Heart right ventricle (tissue), 16 donors: ENCODE measurements at regions of chr9 and their contacts with region 1.

Region 1: GRCh38 chr9:121992571-121993212 is 100.4 kb downstream of the TTLL11 start:
- DNase-seq: peak; percentile 34 to 67
- ATAC-seq: peak; percentile 46 to 82 (median 78)
- H3K4me3 ChIP-seq: no peak overlapping the region
- H3K27ac ChIP-seq: no peak overlapping the region
- H3K4me1 ChIP-seq: peaks cover 0 to 28% (median 6%) of the 10 kb centered on the region in 9 donors
- H3K27me3 ChIP-seq: no peaks in the 10 kb centered on the region
- CTCF ChIP-seq: peak; percentile 80 to 91 (median 85)

Region 2: DNA sequence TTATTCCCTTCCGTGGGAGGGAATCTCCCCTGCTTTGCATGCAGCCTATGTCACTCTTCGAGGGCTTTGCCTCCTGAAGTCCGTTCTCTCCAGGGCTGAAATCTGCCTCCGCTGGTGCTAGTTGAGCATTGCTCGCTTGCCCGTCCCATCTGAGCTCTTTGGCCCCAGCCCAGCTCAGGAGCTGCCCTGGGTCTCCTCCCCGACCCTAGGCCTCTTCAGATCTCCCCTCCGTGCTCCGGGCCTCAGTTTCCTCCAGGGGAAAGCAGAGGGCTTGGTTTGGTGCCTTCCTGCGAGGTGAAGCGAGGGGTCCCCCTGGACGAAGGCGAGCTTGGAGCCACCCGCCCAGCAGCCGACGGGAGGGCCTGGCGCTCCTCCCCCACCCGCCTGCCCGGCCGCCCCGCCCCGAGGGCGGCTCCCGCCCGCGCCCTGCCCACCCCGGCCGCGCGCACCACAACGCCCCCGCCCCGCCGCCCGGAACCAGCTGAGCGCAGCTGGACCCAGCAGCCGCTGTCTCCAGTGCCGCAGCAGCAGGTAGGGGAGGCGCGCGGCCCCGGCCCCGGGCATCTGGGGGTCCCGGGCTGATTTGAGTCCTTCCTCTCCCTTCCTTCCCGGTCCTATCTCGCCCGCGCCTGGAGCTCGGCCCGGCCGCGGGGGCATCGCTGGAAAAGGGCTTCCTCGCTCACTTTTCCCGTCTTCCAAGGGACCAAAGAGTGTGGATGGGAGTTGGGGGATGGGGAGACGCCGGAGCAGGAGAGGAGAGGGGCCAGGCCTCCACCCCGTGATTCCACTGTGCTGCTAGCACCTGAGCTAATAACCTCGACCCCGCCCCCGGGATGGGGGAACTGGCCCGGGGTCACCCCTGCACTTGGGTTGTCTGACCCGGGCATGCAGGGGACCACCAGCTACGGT is 724.7 kb before region 1 on chr9 and contains the start of gene GSN:
- intact Hi-C with region 1: no loop called
- DNase-seq: peak; percentile 86 to 89
- ATAC-seq: peak; percentile 83 to 94 (median 90)
- H3K4me3 ChIP-seq: peak within 1 kb of the TSS; percentile 79 to 95 (median 90)
- H3K27ac ChIP-seq: peak within 1 kb of the TSS; percentile 70 to 92 (median 88)
- H3K4me1 ChIP-seq: peaks cover 8 to 66% (median 57%) of the 10 kb centered on the region in 9 donors
- H3K27me3 ChIP-seq: no peaks in the 10 kb centered on the region
- CTCF ChIP-seq: peak in 3 of 9 donors; percentile 13 to 17 (median 16)
- total RNA-seq, gene GSN: 532 to 861 (median 668) TPM

Region 3: DNA sequence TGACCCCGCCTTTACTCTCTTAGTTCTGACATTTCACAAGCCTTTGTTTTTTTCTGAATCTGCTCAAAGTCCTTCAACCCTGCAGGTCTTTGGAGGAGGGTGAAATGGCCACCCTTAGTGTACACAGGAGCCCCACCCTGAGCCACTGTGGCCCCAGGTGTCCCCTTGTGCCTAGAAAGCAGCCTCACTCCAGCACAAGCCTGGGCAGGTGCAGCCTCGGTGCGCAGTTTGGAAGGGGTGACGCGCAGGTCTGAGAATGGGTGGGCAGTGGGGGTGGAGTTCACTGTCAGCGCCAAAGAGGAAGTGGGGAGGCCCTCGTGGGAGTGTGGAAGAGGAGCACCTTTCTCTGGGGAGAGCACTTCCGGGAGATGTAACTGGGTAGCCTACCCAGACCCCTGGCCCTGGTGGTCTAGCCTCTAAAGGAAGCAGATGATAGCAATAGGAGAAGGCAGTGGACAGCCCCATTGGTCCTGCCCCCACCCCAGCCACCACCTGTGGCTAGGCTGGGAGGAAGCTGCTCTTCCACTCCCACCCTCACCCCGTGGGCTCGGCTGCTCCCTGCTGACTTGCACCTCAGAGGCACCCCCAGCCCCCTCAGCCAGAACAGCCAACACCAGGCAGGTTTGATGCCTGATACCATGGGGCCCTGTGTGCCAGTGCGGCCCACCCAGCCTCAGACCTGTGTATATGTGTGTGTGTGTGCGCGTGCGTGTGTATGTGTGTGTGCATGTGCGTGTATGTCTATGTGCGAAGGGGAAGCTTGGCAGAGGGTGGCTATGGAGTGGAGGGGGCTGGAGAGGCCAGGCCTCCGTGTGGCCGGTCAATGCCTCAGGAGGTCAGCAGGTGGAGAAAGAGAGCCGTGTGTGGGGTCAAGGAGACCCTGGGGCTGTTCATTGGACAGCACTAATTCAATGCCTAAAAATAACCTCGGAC is 358.1 kb before region 1 on chr9:
- intact Hi-C with region 1: loop called in 4 of 10 experiments (anchors 5 kb)
- DNase-seq: no peak
- ATAC-seq: peak; percentile 61 to 80 (median 74)
- H3K4me3 ChIP-seq: no peak overlapping the region
- H3K27ac ChIP-seq: peak overlapping the region in 5 of 10 donors; percentile 15 to 70 (median 51)
- H3K4me1 ChIP-seq: peaks cover 17 to 69% (median 47%) of the 10 kb centered on the region in 9 donors
- H3K27me3 ChIP-seq: no peaks in the 10 kb centered on the region
- CTCF ChIP-seq: peak; percentile 43 to 75 (median 60)

Region 4: DNA sequence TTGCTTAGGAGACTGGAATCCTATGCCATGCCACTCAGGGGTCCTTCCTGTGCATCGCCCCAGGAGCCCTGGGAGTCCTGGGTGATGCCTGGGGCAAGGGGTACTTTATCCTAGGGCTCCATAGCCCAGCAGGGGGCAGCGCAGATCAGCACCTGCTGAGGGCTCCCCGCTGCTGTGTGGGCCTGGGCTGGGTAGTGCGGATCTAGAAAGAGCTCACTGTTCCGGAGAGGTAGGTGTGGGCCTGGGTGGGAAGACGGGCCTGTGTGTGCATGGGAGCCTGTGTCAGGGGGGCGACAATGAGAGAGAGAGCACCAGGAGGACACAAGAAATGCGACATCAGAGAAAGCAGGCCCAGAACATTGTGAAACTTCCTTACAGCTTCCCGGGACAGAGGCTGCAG is 352.6 kb before region 1 on chr9:
- intact Hi-C with region 1: loop called in 6 of 10 experiments (anchors 2 to 5 kb)
- DNase-seq: peak; percentile 70 to 73
- ATAC-seq: peak; percentile 52 to 84 (median 74)
- H3K4me3 ChIP-seq: no peak overlapping the region
- H3K27ac ChIP-seq: peak overlapping the region in 9 of 10 donors; percentile 32 to 79 (median 47)
- H3K4me1 ChIP-seq: peaks cover 16 to 90% (median 61%) of the 10 kb centered on the region in 9 donors
- H3K27me3 ChIP-seq: no peaks in the 10 kb centered on the region
- CTCF ChIP-seq: peak; percentile 53 to 76 (median 68)

Region 5: DNA sequence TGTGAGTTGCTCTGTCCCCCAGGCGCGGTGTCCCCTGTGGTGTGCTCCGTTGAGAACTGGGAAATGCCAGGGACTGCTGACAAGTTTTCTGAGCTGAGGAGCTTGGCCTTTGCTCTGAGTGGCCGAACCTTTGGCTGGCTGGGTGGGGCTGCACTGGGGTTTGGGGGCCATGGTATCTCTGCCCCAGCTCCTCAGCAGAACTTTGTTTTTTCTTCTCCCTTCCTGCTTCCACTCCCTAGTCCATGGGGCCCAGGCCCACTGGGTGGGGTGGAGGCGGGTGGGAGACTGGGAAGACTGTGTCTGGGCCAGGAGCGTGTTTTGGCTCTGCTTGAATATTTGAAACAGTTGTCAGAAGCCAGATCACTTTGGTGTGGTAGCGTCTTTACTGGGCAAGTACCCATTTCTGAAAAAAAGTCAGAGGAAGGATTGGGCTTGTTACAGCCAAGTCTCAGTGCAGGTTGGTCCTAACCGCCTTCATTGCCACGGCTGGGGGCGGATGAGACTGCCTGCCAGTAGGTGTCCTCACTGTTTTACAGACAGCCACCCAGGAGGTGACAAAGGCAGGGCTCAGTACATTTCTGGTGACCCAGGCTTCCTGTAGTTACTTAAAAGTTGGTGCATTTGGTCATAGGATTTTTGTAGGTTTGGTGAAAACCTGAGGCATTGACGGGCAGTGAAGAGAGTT is 248.5 kb before region 1 on chr9:
- intact Hi-C with region 1: loop called in 7 of 10 experiments (anchors 2 to 10 kb)
- DNase-seq: peak; percentile 67 to 75
- ATAC-seq: peak; percentile 43 to 83 (median 73)
- H3K4me3 ChIP-seq: peak overlapping the region; percentile 23 to 64 (median 52)
- H3K27ac ChIP-seq: peak overlapping the region; percentile 89 to 98 (median 94)
- H3K4me1 ChIP-seq: peaks cover 57 to 100% (median 90%) of the 10 kb centered on the region in 9 donors
- H3K27me3 ChIP-seq: no peaks in the 10 kb centered on the region
- CTCF ChIP-seq: peak; percentile 29 to 77 (median 54)

Region 6: GRCh38 chr9:121861501-121862180 is 131.1 kb before region 1 on chr9:
- intact Hi-C with region 1: loop called in 2 of 10 experiments (anchors 10 kb)
- DNase-seq: peak; percentile 49 to 50
- ATAC-seq: peak in 7 of 8 donors; percentile 77 to 93 (median 79)
- H3K4me3 ChIP-seq: no peak overlapping the region
- H3K27ac ChIP-seq: no peak overlapping the region
- H3K4me1 ChIP-seq: peaks cover 0 to 20% (median 13%) of the 10 kb centered on the region in 9 donors
- H3K27me3 ChIP-seq: no peaks in the 10 kb centered on the region
- CTCF ChIP-seq: peak; percentile 27 to 74 (median 64)

Region 7: GRCh38 chr9:121876658-121877271 is 115.9 kb before region 1 on chr9:
- intact Hi-C with region 1: loop called in 1 of 10 experiments (anchors 10 kb)
- DNase-seq: peak in 1 of 2 donors; percentile 35
- ATAC-seq: peak; percentile 23 to 95 (median 74)
- H3K4me3 ChIP-seq: no peak overlapping the region
- H3K27ac ChIP-seq: peak overlapping the region in 1 of 10 donors; percentile 43
- H3K4me1 ChIP-seq: peaks cover 0 to 13% (median 5%) of the 10 kb centered on the region in 9 donors
- H3K27me3 ChIP-seq: no peaks in the 10 kb centered on the region
- CTCF ChIP-seq: no peak